HEK293T (cell line): ENCODE measurements at regions of chr16 and their contacts with region 1.

Region 1: GRCh38 chr16:22188595-22189442 is 17.3 kb upstream of the EEF2K start:
- DNase-seq: peak; percentile 65

Region 2: GRCh38 chr16:22001591-22001990 is 187.2 kb before region 1 on chr16:
- CTCF ChIA-PET with region 1: interaction called, 10 read pairs
- POLR2A ChIA-PET with region 1: interaction called, 5 read pairs
- DNase-seq: no peak